ENCODE measurements at regions of chr20 and their contacts with region 1.

Region 1: DNA sequence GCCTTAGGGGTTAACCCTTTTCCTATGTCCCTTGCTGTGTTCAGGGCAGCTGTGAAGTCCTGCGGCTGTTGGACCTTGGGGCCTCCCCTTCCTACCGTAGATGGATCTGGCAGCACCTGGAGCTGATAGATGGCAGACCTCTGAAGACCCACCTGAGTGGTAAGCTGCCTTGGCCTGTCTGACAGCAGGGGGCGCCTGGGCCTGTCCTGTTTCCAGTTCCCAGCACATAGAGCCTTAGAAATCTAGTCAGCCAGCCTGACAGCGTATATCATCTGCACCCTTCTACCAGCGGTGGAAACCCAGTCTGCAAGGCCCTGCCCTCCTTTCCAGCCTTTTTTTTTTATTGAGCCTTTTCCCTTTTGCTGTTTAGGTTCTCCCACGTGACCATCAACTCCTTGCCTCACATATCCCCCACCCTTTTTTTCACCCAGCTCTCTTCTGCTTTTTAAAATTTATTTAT is 26.6 kb downstream of the CNBD2 start:
- DNase-seq: peak; percentile 87
- ATAC-seq: peak; percentile 96 to 97

Region 2: DNA sequence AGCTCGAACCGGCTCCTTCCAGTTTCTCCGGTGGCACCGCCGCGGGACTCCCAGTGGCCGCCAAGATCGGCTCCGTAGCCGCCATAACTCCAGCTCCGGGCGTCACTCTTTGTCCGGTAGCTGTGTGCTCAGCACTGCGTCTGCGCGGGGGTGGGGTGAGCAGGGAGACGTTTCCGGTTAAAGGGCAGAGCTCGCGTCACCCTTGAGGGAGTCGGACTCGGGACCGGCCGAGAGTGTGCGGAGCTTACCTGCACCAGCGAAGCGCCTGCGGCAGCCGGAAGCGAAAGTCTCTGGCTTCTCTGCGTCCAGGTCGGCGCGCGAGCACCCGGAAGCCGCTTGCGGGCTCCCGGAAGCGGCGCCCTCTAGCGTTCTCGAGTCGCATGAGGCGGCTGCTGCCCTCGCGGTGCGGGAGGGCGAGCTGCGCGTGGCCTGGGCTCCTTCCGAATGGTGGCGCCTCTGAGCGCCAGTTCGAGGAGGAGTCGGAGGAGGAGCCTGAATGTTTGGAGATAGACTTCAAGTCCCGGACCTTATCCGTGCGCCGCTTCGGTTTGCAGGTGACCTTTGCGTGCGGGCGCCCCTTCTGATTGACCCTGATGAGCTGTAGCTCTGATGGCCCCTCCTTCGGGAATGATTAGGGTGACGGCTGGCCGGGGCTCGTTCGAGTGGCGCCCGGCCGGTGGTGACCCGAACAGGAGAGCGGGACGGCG is 40.7 kb before region 1 on chr20 and contains the start of gene SCAND1:
- intact Hi-C with region 1: no loop called
- DNase-seq: peak; percentile 95
- ATAC-seq: peak; percentile 90 to 95
- total RNA-seq, gene SCAND1: 41.0 to 52.2 TPM

Region 3: GRCh38 chr20:36132802-36133211 is 137.8 kb after region 1 on chr20:
- intact Hi-C with region 1: loop called (anchors 1 to 2 kb)
- DNase-seq: no peak
- ATAC-seq: no peak

Region 4: DNA sequence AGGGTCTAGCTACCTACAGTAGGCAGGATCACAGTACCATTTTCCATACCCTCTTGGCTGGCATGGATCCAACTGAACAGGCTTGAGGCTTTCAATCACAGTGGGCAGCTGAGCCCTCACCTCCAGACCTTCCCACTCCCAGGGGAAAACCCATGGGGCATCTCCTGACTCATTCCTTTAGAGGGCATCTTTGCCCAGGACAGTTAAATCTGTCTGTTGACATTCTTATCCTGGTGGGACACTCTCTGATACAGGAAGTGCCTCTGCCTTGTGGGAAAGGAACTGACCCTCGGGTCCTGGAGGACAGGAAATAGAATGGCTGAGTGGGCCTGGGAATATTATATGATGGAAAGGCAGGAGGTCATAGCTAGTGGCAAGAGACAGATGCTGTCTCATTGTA is 149.3 kb after region 1 on chr20:
- intact Hi-C with region 1: loop called in 1 of 2 experiments (anchors 2 kb)
- DNase-seq: no peak
- ATAC-seq: no peak

Region 5: DNA sequence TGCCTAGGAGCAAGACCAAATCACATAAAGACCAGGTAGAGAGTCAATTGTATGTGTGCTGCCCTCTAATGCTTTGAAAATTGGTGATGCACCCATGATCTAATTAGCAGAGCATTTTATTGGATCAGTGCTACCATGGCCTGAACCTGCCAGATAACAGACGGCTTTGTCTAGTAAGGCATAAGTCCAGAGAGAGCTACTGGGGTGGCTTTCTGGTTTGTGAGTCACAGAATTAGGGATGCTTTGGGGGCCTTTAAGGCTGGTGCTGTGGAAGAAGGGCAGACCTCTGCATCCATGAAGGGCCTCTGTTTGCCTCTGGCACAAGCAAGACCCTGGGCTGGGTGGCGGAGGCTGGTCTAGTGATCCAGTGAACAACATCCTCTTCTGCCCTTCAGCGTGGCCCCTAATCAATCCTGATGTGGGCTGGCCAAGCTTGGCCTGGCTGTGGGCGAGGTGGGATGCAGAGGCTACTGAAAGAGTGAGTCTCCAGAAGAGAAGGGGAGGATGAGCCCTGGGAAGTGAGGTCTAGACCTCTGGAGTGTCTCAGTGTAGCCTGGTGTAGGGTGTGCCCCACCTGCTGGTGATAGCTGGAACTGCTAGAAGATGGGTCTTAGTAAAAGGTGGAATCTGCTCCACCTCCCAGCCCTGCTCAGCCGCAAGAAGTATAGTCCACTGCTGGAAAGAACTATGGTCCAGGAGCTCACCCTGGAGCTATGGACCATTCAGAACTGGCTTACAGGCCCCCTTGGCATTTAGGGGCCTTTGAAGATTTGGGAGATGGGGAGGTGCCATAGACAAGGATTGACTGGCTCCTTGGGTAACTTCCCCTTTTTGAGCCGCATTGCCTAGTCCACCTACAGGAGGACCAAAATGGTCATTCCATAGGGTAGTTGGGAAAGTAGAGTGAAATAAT is 204.6 kb after region 1 on chr20:
- intact Hi-C with region 1: loop called in 1 of 2 experiments (anchors 5 kb)
- DNase-seq: peak; percentile 80
- ATAC-seq: peak; percentile 77 to 85

Measured in left cardiac atrium (tissue), 4 donors.